ENCODE measurements at regions of chr2 and their contacts with region 1.

Region 1: GRCh38 chr2:177604271-177605065 is 211.9 kb downstream of the AGPS start:
- DNase-seq: peak in 4 of 5 donors; percentile 24 to 65 (median 26)
- H3K4me3 ChIP-seq: no peak overlapping the region
- H3K27ac ChIP-seq: no peak overlapping the region
- H3K4me1 ChIP-seq: peaks cover 10% of the 10 kb centered on the region
- H3K27me3 ChIP-seq: no peaks in the 10 kb centered on the region
- CTCF ChIP-seq: peak; percentile 27 to 65 (median 61)
- EP300 ChIP-seq: no peak
- POLR2A ChIP-seq: no peak

Region 2: DNA sequence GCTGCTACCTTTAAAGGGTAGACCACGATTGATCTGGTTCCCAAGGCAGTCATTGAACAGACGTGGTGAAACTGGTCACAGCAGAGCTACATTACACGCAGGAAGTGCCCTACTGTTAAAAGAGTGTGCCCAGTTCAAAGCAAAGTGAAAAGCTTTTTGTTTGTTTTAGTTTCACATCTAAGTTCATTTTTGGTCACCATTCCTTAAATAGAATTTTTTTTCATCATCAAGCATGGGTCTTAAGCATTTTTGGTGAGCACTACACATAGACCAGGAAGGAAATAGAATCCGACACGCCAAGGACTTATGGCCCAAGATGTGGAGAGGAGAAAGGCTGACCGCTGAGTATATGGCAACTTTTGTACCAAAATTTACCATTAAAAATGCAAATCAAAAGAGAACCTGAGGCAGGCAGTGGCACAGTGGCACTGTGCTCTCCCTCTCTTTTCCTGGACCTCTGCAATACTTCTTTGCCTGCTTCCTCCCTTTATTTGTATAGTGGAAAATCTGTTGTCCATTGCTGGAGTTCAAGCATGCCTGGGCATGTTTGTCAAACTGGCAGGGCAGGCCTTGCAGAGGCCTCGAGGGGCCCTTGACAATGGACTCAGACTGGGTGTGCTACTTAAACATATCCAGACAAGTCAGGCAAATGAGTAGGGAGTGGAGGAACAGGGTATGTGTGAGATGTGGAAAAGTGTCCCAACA is 434.5 kb before region 1 on chr2:
- intact Hi-C with region 1: loop called in 2 of 4 experiments (anchors 5 to 10 kb)
- DNase-seq: no peak
- H3K4me3 ChIP-seq: no peak overlapping the region
- H3K27ac ChIP-seq: no peak overlapping the region
- H3K4me1 ChIP-seq: peaks cover 3% of the 10 kb centered on the region
- H3K27me3 ChIP-seq: no peaks in the 10 kb centered on the region
- CTCF ChIP-seq: no peak
- EP300 ChIP-seq: no peak
- POLR2A ChIP-seq: no peak

Region 3: GRCh38 chr2:177763532-177764265 is 159.2 kb after region 1 on chr2:
- intact Hi-C with region 1: loop called in 1 of 4 experiments (anchors 10 kb)
- DNase-seq: peak; percentile 60 to 78 (median 73)
- H3K4me3 ChIP-seq: no peak overlapping the region
- H3K27ac ChIP-seq: no peak overlapping the region
- H3K4me1 ChIP-seq: peaks cover 3% of the 10 kb centered on the region
- H3K27me3 ChIP-seq: no peaks in the 10 kb centered on the region
- CTCF ChIP-seq: peak; percentile 34 to 49 (median 47)
- EP300 ChIP-seq: no peak
- POLR2A ChIP-seq: no peak

Measured in ovary (tissue), 10 donors.